ENCODE measurements at regions of chr9 and their contacts with region 1.

Region 1: DNA sequence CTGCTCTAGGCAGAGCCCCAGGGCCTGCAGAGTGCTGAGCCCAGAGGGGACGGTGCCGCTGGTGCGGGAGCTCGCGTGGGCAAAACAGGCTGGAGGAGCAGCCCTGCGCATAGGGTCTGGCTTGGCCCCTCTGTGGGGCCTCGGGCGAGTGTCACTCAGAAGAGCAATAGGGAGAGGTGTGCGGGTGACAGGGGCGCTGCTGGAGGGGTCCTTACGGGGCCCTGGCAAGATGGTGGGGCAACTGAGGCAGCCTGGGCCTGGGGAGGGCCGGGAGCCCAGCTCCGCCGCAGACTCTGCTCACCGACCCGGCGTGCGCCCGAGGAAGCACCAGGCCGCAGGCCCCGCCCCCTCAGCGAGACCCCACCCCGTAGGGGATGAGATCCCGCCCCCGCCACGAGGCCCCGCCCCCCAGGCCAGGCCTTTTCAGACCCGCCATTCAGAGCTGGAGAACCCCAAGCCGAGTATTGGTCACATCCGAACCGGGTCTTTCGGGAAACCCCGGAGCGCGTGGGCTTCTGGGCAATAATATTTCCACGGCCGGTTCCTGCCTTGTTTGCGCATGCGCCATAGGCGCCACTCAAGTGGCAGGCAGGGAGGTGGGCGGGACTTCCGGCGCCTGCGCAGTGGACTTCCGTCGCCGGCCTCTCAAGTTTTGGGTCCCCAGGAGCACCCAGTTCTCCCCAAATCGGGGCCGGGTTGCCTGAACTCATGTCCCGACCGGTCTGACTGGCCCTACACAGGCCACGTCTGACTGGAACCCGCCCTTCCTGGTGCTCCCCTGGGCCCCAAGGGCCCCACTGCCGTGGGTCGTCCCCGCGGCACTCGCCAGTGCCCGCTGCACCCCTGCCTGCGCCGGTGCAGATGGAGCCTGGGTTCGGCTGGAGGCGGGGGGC is 1.3 kb upstream of the RNF208 start:
- DNase-seq: peak; percentile 97
- ATAC-seq: peak; percentile 33
- H3K4me3 ChIP-seq: peak overlapping the region; percentile 88
- H3K27ac ChIP-seq: peak overlapping the region; percentile 81
- H3K4me1 ChIP-seq: peaks cover 47% of the 10 kb centered on the region
- H3K27me3 ChIP-seq: no peaks in the 10 kb centered on the region
- CTCF ChIP-seq: no peak

Region 2: DNA sequence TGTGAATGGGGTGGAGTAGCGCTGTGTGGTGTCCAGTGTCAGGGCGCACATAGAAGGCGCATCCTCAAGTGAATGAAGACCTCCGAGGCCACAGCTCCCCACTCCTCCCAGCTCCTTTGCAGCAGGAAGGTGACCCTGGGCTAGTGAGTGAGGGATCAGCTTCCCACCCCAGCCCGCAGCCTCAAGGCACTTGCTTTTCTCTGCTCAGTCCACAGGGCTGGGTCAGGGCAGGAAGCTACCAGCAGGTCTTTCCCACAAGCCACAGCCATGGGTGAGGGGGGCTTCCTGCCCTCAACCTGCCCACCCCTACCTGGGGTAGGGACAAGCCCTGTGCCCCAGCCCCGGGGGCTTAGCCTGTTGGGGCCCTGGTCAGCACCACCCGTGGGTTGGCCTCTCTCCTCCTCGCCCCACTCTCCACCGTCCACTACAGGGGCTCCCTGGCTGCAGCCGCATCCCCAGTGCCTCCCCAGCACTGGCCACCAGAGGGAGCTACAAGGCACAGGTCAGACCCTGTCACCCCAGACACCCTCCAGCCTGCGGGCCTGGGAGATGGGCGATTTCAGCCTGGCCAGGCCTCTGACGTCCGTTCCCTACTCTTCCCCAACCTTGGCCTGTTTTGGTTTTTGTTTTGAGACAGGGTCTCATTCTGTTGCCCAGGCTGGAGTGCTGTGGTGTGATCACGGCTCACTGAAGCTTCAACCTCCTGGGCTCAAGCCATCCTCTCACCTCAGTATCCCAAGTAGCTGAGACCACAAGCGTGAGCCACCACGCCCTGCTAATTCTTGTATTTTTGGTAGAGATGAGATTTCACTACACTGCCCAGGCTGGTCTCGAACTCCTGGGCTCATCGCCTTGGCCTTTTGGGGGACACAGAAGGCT is 194.0 kb before region 1 on chr9:
- CTCF ChIA-PET with region 1: no interaction called
- POLR2A ChIA-PET with region 1: no interaction called
- intact Hi-C with region 1: no loop called
- DNase-seq: peak; percentile 66
- ATAC-seq: peak; percentile 59
- H3K4me3 ChIP-seq: peak overlapping the region; percentile 68; the same call in 1 of the 2 replicates
- H3K27ac ChIP-seq: no peak overlapping the region
- H3K4me1 ChIP-seq: peaks cover 13% of the 10 kb centered on the region; the same call in 1 of the 2 replicates
- H3K27me3 ChIP-seq: no peaks in the 10 kb centered on the region
- CTCF ChIP-seq: peak; percentile 80

Region 3: DNA sequence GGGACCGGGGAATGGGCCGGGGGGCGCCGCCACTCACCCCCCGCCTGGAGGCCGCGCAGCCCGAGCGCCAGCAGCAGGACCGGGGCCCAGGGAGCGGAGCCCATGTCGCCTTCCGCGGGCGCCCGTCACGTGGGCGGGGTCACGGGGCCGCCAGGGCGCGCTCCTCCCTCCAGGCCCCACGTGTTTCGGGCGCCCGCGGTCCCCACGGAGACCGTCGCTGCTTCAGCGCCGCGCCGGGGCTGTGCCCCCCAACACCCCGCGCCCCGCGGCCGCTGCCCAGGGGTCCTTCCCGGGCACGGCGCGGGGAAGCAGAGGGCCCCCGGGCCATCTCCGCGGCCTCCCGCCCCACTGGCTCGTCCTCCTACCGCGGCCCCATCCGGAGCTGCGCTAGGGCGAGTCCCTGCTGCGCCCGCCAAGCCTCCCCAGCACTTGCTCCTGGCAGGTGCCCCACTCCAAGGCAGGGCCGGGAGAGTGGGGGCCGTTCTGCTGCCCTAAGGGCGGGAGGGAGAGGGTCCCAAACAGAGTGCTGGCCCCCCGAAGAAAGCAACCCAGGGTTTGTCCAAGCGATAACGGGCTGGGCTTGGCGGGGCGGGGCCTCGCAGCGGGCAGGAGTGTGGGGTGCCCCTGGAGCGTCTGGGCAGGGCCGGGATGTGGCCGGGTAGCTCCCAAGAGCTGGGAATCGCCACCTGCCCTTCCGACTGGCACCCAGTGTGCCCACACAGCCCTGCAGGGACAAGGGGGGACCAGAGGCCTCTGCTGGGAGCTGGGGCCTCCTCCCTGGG is 108.5 kb before region 1 on chr9 and contains the start of gene DPP7:
- CTCF ChIA-PET with region 1: no interaction called
- POLR2A ChIA-PET with region 1: interaction called, 5 read pairs
- intact Hi-C with region 1: loop called (anchors 5 kb)
- DNase-seq: peak; percentile 41
- ATAC-seq: peak; percentile 79
- H3K4me3 ChIP-seq: peak within 1 kb of the TSS; percentile 70
- H3K27ac ChIP-seq: no peak within 1 kb of the TSS
- H3K4me1 ChIP-seq: 0 out of 2 replicates have a peak, but pooled peaks cover 5% of the 10 kb centered on the region
- H3K27me3 ChIP-seq: no peaks in the 10 kb centered on the region
- CTCF ChIP-seq: no peak
- total RNA-seq, gene DPP7: 101 and 103 TPM in 2 replicates

Region 4: DNA sequence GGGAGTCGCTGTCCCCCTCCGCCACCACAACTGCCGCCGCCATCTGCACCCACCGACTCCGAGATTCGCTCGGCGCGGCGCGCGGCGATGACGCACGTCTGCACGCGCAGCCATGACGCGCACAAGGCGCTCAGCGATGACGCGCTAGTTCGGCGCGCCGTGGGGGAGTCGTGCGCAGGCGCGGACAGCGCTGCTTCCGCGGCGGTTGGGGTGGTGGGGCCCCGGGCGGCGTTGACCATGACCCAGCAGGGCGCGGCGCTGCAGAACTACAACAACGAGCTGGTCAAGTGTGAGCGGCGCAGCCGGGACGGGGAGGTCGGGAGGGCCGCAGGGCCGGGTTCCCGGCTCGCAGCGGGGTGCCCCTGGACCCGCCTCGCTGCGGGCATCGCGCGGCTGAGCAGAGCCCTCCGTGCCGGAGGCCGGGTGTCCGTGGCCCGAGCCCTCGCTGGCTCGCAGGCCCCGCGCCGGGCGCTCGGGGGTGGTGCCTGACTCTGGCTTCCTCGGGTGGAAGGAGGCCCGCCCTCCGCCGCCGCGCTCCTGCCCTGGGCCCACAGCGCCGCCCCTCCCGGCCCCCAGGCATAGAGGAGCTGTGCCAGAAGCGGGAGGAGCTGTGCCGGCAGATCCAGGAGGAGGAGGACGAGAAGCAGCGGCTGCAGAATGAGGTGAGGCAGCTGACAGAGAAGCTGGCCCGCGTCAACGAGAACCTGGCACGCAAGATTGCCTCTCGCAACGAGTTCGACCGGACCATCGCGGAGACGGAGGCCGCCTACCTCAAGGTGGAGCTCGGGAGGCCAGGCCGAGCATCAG is 34.6 kb before region 1 on chr9 and contains the starts of genes ANAPC2 and SSNA1:
- CTCF ChIA-PET with region 1: interaction called, 4 read pairs
- POLR2A ChIA-PET with region 1: interaction called, 8 read pairs
- intact Hi-C with region 1: loop called (anchors 5 kb)
- DNase-seq: peak; percentile 91
- ATAC-seq: peak; percentile 75
- H3K4me3 ChIP-seq: peak within 1 kb of the TSS; percentile 99
- H3K27ac ChIP-seq: peak within 1 kb of the TSS; percentile 92
- H3K4me1 ChIP-seq: peaks cover 25% of the 10 kb centered on the region
- H3K27me3 ChIP-seq: no peaks in the 10 kb centered on the region
- CTCF ChIP-seq: peak; percentile 44; the same call in 1 of the 2 replicates
- total RNA-seq, gene ANAPC2: 21.6 and 30.2 TPM in 2 replicates
- total RNA-seq, gene SSNA1: 123 and 148 TPM in 2 replicates

Region 5: DNA sequence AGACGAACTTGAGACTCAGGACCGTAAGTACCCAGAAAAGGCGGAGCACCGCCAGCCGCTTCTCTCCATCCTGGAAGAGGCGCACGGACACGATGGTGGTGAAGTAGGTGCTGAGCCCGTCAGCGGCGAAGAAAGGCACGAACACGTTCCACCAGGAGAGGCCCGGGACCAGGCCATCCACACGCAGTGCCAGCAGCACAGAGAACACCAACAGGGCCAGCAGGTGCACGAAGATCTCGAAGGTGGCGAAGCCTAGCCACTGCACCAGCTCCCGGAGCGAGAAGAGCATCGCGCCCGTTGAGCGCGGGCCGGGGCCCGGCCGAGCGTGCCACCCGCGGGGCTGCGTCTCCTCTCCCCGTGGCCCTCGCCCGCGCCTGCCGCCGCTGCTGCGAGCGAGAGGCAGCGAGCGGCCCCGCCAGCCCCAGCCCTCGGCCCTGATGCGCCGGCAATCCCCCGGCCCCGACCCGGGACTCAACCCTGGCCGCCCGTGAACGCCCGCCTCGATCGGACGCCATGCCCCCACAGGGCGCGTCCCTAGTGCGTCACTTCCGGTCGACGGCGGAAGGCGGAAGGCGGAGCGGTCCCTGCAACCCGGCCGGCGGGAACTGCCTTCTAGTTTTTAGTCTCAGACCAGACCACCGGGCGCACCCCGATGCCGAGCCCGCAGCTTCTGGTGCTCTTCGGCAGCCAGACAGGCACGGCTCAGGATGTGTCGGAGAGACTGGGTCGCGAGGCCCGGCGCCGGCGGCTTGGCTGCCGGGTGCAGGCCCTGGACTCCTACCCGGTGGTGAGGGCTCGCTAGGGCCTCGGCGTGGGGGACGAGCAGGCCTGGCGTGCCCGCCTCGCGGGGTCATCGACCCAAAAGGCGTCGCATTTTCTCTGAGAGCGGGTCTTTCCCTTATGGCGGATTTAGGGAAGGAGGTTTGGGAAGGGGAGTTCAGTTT is 17.9 kb before region 1 on chr9 and contains the starts of genes NDOR1 and TMEM203:
- CTCF ChIA-PET with region 1: no interaction called
- POLR2A ChIA-PET with region 1: no interaction called
- intact Hi-C with region 1: no loop called
- DNase-seq: peak; percentile 82
- ATAC-seq: peak; percentile 44
- H3K4me3 ChIP-seq: peak within 1 kb of the TSS; percentile 99
- H3K27ac ChIP-seq: 0 out of 2 replicates have a peak within 1 kb of the TSS, but pooled peaks have one; percentile 20
- H3K4me1 ChIP-seq: peaks cover 24% of the 10 kb centered on the region
- H3K27me3 ChIP-seq: no peaks in the 10 kb centered on the region
- CTCF ChIP-seq: no peak
- total RNA-seq, gene NDOR1: 21.5 and 25.7 TPM in 2 replicates
- total RNA-seq, gene TMEM203: 31.3 and 36.4 TPM in 2 replicates

Region 6: DNA sequence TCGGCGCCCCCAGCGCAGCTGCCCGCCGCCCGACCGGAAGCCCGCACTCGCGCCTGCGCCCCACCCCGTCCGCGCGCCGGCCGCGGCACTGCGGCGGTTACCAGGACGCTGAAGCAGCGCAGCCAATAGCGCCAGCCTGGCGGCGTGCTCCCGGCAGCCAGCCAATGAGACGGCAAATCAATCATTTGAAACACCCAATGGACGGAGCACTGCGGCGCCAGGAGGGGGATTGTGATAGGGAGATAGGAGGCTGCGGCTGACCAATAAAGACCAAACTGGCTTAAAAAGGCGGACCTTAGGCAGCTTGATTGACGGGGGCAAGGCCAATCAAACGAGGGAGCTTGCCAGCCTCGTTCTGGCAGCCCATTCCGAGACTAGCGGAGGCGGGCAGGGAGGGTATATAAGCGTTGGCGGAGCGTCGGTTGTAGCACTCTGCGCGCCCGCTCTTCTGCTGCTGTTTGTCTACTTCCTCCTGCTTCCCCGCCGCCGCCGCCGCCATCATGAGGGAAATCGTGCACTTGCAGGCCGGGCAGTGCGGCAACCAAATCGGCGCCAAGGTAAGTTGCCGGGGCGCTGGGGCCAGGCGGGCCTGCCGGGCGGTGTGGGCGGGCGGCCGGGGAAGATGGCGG is 17.7 kb after region 1 on chr9 and contains the start of gene TUBB4B:
- CTCF ChIA-PET with region 1: interaction called, 3 read pairs
- POLR2A ChIA-PET with region 1: interaction called, 32 read pairs
- intact Hi-C with region 1: no loop called
- DNase-seq: peak; percentile 97
- ATAC-seq: peak; percentile 62
- H3K4me3 ChIP-seq: peak within 1 kb of the TSS; percentile 97
- H3K27ac ChIP-seq: peak within 1 kb of the TSS; percentile 89
- H3K4me1 ChIP-seq: peaks cover 37% of the 10 kb centered on the region
- H3K27me3 ChIP-seq: no peaks in the 10 kb centered on the region
- CTCF ChIP-seq: no peak
- total RNA-seq, gene TUBB4B: 424 and 599 TPM in 2 replicates

Region 7: DNA sequence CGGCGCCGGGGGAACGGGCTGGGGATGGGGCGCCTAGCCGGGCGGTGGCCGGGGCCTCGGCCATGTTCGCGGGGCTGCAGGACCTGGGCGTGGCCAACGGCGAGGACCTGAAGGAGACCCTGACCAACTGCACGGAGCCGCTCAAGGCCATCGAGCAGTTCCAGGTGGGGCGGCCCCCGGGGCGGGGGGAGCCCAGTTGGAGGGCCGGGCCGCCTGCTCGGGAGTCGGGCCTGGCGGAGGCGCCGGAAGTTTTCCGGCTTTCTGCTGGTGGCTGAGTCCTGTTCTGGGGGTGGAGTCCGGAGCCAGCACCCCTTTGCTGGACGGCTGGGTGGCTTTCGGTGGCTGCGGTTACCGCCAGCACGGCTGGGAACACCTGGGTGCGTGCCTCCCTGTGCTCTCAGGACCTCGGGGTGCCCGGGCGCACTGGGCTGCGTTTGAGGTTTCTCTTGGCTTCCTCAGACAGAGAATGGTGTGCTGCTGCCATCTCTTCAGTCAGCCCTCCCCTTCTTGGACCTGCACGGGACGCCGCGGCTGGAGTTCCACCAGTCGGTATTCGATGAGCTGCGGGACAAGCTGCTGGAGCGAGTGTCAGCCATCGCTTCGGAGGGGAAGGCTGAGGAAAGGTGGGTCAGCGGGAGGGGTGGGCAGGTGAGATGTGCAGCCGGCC is 32.3 kb after region 1 on chr9:
- CTCF ChIA-PET with region 1: no interaction called
- POLR2A ChIA-PET with region 1: no interaction called
- intact Hi-C with region 1: no loop called
- DNase-seq: peak; percentile 6
- ATAC-seq: peak; percentile 55
- H3K4me3 ChIP-seq: peak overlapping the region; percentile 93
- H3K27ac ChIP-seq: no peak overlapping the region
- H3K4me1 ChIP-seq: peaks cover 15% of the 10 kb centered on the region; the same call in 1 of the 2 replicates
- H3K27me3 ChIP-seq: no peaks in the 10 kb centered on the region
- CTCF ChIP-seq: no peak

Region 8: GRCh38 chr9:137277329-137278041 is 54.2 kb after region 1 on chr9 and contains the start of gene TOR4A:
- CTCF ChIA-PET with region 1: interaction called, 11 read pairs
- POLR2A ChIA-PET with region 1: no interaction called
- intact Hi-C with region 1: no loop called
- DNase-seq: peak; percentile 86
- ATAC-seq: peak; percentile 93
- H3K4me3 ChIP-seq: peak within 1 kb of the TSS; percentile 67
- H3K27ac ChIP-seq: peak within 1 kb of the TSS; percentile 79
- H3K4me1 ChIP-seq: peaks cover 17% of the 10 kb centered on the region
- H3K27me3 ChIP-seq: no peaks in the 10 kb centered on the region
- CTCF ChIP-seq: peak; percentile 49
- total RNA-seq, gene TOR4A: 28.9 and 32.7 TPM in 2 replicates

Region 9: GRCh38 chr9:137564817-137565411 is 341.6 kb after region 1 on chr9:
- CTCF ChIA-PET with region 1: no interaction called
- POLR2A ChIA-PET with region 1: no interaction called
- intact Hi-C with region 1: no loop called
- DNase-seq: no peak
- ATAC-seq: no peak
- H3K4me3 ChIP-seq: no peak overlapping the region
- H3K27ac ChIP-seq: no peak overlapping the region
- H3K4me1 ChIP-seq: no peaks in the 10 kb centered on the region
- H3K27me3 ChIP-seq: no peaks in the 10 kb centered on the region
- CTCF ChIP-seq: no peak

Measured in PC-3 (cell line).